Activated naive CD4-positive, alpha-beta T cell treated with anti-CD3 and anti-CD28 coated beads, Interleukin-2, amount 10 ng/mL, durations not matched to agents 7 days and 5 days (primary cell): ENCODE measurements at regions of chr10 and their contacts with region 1.

Region 1: GRCh38 chr10:119199231-119199992 is 8.0 kb upstream of the GRK5 start:
- DNase-seq: peak; percentile 70
- H3K4me3 Mint-ChIP-seq: no peak overlapping the region
- H3K27ac Mint-ChIP-seq: no peak overlapping the region
- H3K4me1 Mint-ChIP-seq: peaks cover 12% of the 10 kb centered on the region
- H3K27me3 Mint-ChIP-seq: peaks cover 12% of the 10 kb centered on the region

Region 2: DNA sequence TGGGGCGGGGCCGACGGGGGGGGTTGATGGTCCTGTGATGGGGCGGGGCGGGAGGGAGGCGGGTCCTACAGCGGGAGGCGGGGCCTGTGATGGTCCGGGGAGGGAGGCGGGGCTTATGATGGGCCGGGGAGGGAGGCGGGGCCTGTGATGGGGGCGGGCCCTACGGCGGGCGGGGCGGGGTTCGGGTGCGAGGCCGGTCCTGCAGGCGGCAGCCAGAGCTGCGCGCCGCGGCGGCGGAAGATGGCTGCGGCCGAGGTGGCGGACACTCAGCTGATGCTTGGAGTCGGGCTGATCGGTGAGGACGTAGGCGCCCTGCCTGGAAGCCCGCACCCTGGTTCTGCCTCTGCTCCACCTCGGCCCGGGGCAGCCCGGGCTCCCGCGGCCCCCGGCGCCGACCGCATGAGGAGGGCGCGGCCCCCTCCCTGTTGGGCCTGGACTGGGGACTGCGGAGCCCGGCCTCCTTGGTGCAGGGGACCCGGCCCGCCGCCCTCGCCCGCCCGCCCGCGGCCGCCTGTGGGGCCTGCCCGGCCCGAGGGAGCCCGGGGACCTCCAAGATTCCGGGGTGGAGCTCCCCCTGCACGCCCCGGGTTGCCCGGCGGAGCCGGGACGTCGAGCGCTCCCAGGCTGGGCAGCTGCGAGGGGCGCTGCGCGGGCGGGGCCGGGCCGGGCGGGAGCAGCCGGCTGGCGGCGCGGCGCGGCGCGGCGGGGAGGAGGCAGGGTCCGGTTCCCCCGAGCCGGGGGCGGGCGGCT is 95.3 kb before region 1 on chr10 and contains the start of gene DENND10:
- CTCF ChIA-PET with region 1: interaction called, 10 read pairs
- DNase-seq: peak; percentile 77
- H3K4me3 Mint-ChIP-seq: peak within 1 kb of the TSS; percentile 78
- H3K27ac Mint-ChIP-seq: peak within 1 kb of the TSS; percentile 74
- H3K4me1 Mint-ChIP-seq: peaks cover 46% of the 10 kb centered on the region
- H3K27me3 Mint-ChIP-seq: peaks cover 19% of the 10 kb centered on the region

Region 3: GRCh38 chr10:119178372-119179119 is 20.9 kb before region 1 on chr10 and contains the start of gene PRDX3:
- CTCF ChIA-PET with region 1: interaction called, 13 read pairs
- DNase-seq: peak; percentile 95
- H3K4me3 Mint-ChIP-seq: peak within 1 kb of the TSS; percentile 90
- H3K27ac Mint-ChIP-seq: peak within 1 kb of the TSS; percentile 92
- H3K4me1 Mint-ChIP-seq: peaks cover 45% of the 10 kb centered on the region
- H3K27me3 Mint-ChIP-seq: peaks cover 1% of the 10 kb centered on the region

Region 4: DNA sequence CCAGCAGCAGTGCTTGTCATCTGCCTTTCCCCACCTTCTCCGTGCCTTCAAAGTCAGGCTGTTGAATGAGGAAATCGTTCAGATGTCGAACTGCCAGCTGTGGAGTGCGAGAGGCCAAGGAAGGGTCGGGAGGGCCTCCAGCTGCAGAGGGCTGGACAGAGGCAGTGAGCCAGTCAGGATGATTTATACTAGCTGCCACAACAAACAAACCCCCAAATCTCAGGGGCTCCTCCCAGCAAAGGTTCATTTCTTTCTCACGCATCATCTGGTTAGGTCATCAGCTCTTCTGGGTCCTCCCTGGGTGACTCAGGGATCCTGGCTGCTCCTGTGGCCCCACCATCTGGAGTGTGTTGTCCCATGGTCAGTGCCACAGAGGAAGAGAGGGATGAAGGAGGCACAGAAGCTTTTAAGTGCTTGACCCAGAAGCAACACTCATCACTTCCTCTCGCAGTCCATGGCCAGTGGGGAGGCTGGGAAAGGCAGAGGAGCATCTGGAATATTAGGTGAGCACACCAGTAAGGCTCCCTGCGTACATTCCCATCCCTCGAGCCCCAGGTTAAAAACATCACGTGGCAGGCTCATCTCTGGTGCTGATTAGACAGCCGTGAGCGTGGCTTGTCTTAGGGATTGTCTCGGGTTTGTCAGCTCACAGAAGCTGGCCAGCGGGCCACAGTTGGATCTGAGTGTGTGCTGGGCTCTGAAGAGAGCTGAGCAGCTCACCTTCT is 202.4 kb after region 1 on chr10:
- CTCF ChIA-PET with region 1: interaction called, 14 read pairs
- DNase-seq: no peak
- H3K4me3 Mint-ChIP-seq: no peak overlapping the region
- H3K27ac Mint-ChIP-seq: no peak overlapping the region
- H3K4me1 Mint-ChIP-seq: no peaks in the 10 kb centered on the region
- H3K27me3 Mint-ChIP-seq: no peaks in the 10 kb centered on the region

Region 5: DNA sequence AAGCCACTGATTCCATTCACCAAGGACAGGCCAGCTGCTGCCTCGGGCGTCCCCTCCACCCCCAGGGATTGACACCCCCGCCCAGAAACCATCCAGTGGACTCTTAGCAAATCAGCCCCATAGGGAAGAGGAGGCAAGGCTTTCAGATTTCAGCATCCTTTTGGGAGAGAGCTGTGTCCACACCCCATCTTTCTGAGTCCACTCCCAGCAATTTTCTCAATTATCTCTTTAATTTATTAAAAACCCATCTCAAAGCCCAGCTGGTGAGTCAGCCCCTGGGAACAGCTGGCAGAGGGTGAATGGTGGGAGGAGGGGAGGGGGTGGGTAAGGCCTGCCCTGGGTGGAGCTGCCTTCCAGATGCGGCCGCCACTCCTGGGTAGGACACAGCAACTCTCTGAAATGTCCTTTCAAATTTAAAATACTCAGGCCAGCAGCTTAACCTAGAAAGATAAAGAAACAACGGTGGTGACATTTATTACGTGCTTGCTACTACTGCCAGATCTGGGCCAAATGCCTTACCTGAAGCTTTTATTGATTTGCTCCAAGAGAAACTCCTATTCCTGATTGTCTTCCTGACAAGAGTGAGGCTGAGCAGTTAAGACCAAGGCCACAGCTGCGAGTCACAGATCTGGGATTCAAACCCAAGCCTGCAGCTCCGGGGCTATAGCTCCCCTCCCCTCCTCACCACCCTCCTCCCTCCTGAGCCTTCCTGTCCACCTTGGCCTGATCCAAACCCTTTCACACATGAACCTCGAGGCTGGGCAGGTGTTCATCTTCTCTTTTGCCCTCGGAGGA is 222.7 kb after region 1 on chr10:
- CTCF ChIA-PET with region 1: interaction called, 96 read pairs
- DNase-seq: no peak
- H3K4me3 Mint-ChIP-seq: no peak overlapping the region
- H3K27ac Mint-ChIP-seq: no peak overlapping the region
- H3K4me1 Mint-ChIP-seq: no peaks in the 10 kb centered on the region
- H3K27me3 Mint-ChIP-seq: no peaks in the 10 kb centered on the region

Region 6: GRCh38 chr10:119542988-119543813 is 343.8 kb after region 1 on chr10:
- CTCF ChIA-PET with region 1: interaction called, 33 read pairs
- DNase-seq: peak; percentile 77
- H3K4me3 Mint-ChIP-seq: peak overlapping the region; percentile 91
- H3K27ac Mint-ChIP-seq: peak overlapping the region; percentile 94
- H3K4me1 Mint-ChIP-seq: peaks cover 42% of the 10 kb centered on the region
- H3K27me3 Mint-ChIP-seq: peaks cover 26% of the 10 kb centered on the region